Heart left ventricle (tissue), 16 donors: ENCODE measurements at regions of chr16 and their contacts with region 1.

Region 1: GRCh38 chr16:86519649-86520316 is 9.5 kb downstream of the FOXF1 start:
- DNase-seq: peak; percentile 29 to 85 (median 57)
- ATAC-seq: peak; percentile 11 to 53 (median 47)
- H3K4me3 ChIP-seq: peak overlapping the region in 3 of 12 donors; percentile 1 to 16 (median 8)
- H3K27ac ChIP-seq: peak overlapping the region in 1 of 12 donors; percentile 17
- H3K4me1 ChIP-seq: peaks cover 0 to 27% (median 10%) of the 10 kb centered on the region in 12 donors
- H3K27me3 ChIP-seq: peaks cover 30 to 94% (median 75%) of the 10 kb centered on the region in 9 donors
- CTCF ChIP-seq: peak; percentile 85 to 97 (median 92)
- POLR2A ChIP-seq: no peak

Region 2: DNA sequence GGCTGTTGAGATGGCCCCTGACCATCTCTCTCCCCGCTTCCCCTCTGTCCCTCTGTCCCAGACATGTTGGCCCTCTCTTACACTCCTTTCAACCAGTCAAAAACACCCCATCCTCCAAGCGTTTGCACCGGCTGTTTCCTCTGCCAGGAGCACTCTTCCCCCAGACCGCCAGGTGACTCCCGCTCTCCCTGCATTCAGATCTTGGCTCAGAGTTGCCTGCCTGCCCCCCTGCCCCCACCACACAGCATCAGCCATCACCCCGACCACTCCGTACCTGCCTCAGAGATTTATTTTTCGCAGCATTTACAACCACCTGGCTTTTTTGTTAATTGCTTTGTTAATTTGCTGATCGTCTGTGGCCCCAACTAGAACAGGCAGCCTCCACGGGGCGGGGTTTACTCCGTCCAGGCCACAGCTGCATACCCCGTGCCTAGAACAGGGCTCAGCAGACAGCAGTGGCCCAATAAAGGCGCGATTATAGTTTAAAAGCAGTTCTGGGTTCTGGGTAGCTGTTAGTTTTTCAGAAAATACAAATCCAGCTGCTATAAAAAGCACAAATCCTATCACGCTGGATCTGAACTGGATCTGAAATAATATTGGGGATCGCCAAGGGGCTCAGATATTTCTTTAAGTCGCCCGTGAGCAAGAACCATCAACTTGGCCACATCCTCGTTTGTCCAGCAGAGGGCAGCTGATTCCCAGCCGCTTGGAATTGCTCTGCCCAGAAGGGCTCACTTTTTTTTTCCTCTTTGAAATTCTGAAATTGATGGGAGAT is 447.3 kb before region 1 on chr16:
- intact Hi-C with region 1: loop called (anchors 1 to 2 kb)
- DNase-seq: peak in 4 of 5 donors; percentile 52 to 70 (median 52)
- ATAC-seq: peak in 2 of 4 donors; percentile 60 to 73
- H3K4me3 ChIP-seq: no peak overlapping the region
- H3K27ac ChIP-seq: no peak overlapping the region
- H3K4me1 ChIP-seq: no peaks in the 10 kb centered on the region
- H3K27me3 ChIP-seq: peaks cover 0 to 58% (median 7%) of the 10 kb centered on the region in 9 donors
- CTCF ChIP-seq: peak; percentile 68 to 86 (median 77)
- POLR2A ChIP-seq: no peak

Region 3: DNA sequence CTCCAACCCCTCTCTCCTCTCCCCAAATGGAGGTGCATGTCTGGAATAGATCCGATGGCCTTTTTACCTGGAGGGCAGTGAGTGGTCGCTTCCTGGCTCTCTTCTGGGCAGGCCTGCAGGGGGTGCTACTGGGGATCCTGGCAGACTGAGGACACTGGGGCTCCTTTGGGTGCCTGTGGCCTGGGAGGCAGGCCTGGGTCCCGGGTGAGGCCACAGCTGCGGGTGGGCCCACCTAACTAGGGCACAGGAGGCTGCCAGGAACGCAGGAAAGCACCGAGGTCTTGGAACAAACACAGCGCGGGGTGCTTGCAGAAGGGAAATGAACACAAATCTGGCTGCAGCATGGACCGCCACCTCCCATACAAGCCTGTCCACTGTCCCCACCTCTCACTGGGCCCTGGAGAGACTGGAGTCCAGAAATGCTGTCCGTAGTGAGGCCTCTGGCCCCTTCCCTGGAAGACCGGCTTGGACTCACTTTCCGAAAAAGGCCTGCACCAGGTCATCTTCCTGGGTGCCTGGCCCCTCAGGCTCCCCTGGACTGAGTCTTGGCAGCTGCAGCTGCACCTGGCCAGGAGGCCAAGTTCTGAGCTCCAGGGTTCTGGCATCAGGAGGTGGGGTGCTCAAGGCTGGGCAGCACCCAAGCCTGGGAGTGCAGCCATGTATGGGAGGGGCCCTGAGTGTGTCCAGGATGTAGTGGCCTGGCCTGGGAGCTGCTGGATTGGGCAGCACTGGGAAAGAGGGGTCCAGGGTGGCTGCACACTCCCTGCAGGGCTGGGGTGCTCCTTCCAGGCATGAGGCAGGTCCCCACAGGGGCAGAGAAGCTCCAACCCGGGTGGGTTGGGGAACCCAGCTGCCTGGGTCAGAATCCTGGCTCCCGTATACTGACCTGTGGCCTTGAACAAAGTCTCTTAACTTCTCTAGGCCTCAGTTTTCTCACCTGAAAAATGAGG is 425.7 kb before region 1 on chr16:
- intact Hi-C with region 1: no loop called
- DNase-seq: no peak
- ATAC-seq: no peak
- H3K4me3 ChIP-seq: no peak overlapping the region
- H3K27ac ChIP-seq: no peak overlapping the region
- H3K4me1 ChIP-seq: no peaks in the 10 kb centered on the region
- H3K27me3 ChIP-seq: peaks cover 0 to 36% (median 6%) of the 10 kb centered on the region in 9 donors
- CTCF ChIP-seq: no peak
- POLR2A ChIP-seq: no peak

Region 4: DNA sequence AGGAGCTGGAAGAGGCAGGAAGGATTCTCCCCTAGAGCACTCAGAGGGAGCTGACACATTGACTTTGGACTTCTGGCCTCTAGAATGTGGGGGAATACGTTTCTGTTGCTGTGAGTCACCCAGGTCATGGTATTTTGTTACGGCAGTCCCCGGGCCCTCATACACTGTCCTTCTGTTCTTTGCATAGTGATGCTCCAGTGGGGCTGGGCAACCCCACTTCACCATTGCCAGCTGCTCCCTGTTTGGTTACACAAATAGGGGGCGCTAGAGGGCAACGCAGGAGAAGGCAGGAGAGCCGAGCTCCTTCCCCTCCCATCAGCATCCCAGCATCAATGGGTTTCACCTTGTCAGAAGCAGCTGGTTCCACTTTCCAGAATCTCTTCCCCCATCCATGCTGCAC is 267.2 kb before region 1 on chr16:
- intact Hi-C with region 1: loop called in 1 of 10 experiments (anchors 10 kb)
- DNase-seq: no peak
- ATAC-seq: no peak
- H3K4me3 ChIP-seq: no peak overlapping the region
- H3K27ac ChIP-seq: no peak overlapping the region
- H3K4me1 ChIP-seq: no peaks in the 10 kb centered on the region
- H3K27me3 ChIP-seq: peaks cover 0 to 11% (median 0%) of the 10 kb centered on the region in 9 donors
- CTCF ChIP-seq: peak in 7 of 12 donors; percentile 17 to 35 (median 30)
- POLR2A ChIP-seq: no peak

Region 5: GRCh38 chr16:86343027-86343787 is 176.6 kb before region 1 on chr16:
- intact Hi-C with region 1: loop called (anchors 1 to 10 kb)
- DNase-seq: peak in 3 of 5 donors; percentile 34 to 41 (median 36)
- ATAC-seq: peak in 2 of 4 donors; percentile 21 to 85
- H3K4me3 ChIP-seq: peak overlapping the region in 6 of 12 donors; percentile 9 to 28 (median 13)
- H3K27ac ChIP-seq: peak overlapping the region in 5 of 12 donors; percentile 40 to 87 (median 51)
- H3K4me1 ChIP-seq: peaks cover 0 to 18% (median 9%) of the 10 kb centered on the region in 12 donors
- H3K27me3 ChIP-seq: peaks cover 3 to 69% (median 19%) of the 10 kb centered on the region in 9 donors
- CTCF ChIP-seq: no peak
- POLR2A ChIP-seq: no peak